Left cardiac atrium (tissue), 4 donors: ENCODE measurements at regions of chr12 and their contacts with region 1.

Region 1: DNA sequence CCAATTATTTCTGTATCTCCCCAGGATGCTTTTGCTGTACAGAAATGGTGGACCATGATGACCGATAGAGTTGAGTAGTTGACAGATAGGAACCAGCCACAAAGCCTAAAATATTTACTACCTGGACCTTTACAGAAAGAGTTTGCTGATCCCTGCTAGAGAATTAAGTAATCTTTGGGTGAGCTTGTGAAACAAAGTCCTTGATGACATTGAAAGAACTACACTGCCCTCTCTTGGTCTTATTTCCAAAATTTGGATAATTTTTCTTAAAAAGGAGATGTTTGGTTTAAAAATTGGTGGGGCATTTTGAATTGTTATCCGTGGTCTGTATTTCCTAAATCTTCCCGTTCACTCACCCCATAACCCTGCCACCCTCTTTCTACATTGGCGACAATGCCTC is 13.7 kb upstream of the TCTN1 start:
- DNase-seq: no peak
- ATAC-seq: peak; percentile 41 to 56

Region 2: DNA sequence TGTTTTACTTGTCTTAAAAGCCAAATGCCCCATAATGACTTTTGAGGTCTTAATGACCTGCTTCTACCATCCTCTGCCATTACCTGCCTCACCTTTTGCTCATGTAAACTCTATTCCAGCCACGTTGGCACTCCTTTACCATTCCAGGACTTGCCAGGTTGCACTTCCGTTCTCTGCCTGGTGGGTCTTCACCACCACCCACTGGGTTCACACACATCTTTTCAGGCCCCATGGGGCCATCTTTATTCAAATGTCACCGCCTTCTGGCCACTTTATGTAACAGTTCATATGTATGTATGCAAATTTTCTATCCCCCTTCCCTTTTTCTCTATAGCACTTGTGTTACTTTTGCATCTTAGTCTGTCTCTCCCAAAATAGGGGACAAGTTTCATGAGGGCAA is 261.5 kb before region 1 on chr12:
- intact Hi-C with region 1: no loop called
- DNase-seq: no peak
- ATAC-seq: no peak

Region 3: GRCh38 chr12:110449799-110450497 is 150.3 kb before region 1 on chr12 and contains the start of gene ARPC3:
- intact Hi-C with region 1: loop called in 1 of 2 experiments (anchors 5 kb)
- DNase-seq: peak; percentile 96
- ATAC-seq: peak; percentile 99
- total RNA-seq, gene ARPC3: 108 to 123 TPM

Region 4: DNA sequence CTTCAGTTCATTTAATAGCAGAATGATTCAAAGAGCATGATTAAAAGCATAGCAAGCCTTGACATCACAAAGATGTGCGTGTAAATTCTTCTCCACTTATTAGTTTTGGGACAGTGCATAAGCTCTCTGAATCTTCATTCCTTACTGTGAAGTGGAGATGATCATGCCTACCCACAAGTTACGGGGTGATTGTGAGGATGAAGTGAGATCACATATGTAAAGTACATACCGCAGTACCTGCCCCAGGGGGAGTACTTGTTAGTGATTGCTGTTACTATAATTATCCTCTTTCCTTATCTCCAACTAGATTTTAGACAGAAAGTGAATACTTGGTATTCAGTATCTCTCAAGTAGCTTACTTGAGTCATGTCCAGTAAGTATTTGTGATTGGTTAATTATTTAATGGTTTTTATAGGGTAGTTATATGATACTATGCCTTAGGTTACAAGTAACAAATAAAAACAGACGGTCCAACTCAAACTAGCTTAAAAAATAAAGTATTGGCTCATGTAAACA is 92.1 kb before region 1 on chr12:
- intact Hi-C with region 1: loop called (anchors 1 to 5 kb)
- DNase-seq: no peak
- ATAC-seq: no peak

Region 5: GRCh38 chr12:110513842-110514241 is 86.4 kb before region 1 on chr12:
- intact Hi-C with region 1: loop called (anchors 1 to 5 kb)
- DNase-seq: no peak
- ATAC-seq: no peak